Transverse colon (tissue), 4 donors: ENCODE measurements at regions of chr7 and their contacts with region 1.

Region 1: DNA sequence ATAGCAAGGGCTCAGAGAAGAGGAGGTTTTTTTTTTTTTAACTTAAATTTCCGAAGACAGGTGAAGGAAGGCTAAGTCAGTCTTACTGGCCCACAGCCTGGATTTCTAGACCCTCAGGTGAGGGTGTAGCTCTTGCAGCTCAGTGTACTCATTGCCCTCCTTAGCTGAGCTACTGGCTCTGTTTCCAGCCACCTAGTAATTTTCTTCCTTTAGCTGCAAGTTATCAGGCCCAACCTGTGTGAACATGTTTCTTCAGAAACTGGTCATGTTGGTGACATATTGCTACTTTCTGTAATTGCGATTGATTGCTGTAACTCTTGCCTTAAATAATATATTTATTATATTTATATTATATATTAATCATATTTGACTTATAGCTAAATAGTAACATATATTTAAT is 9.9 kb upstream of the TMEM229A start:
- DNase-seq: no peak
- H3K4me3 ChIP-seq: no peak overlapping the region
- H3K27ac ChIP-seq: no peak overlapping the region
- H3K4me1 ChIP-seq: peaks cover 0 to 28% (median 7%) of the 10 kb centered on the region in 4 donors
- H3K27me3 ChIP-seq: no peaks in the 10 kb centered on the region
- CTCF ChIP-seq: no peak
- EP300 ChIP-seq: no peak
- POLR2A ChIP-seq: no peak

Region 2: GRCh38 chr7:124022551-124022950 is 20.3 kb before region 1 on chr7:
- in situ Hi-C with region 1: no loop called
- intact Hi-C with region 1: loop called (anchors 1 kb)
- DNase-seq: no peak
- H3K4me3 ChIP-seq: no peak overlapping the region
- H3K27ac ChIP-seq: no peak overlapping the region
- H3K4me1 ChIP-seq: no peaks in the 10 kb centered on the region
- H3K27me3 ChIP-seq: peaks cover 11% of the 10 kb centered on the region
- CTCF ChIP-seq: no peak
- EP300 ChIP-seq: no peak
- POLR2A ChIP-seq: no peak

Region 3: GRCh38 chr7:124101173-124101768 is 58.5 kb after region 1 on chr7:
- in situ Hi-C with region 1: no loop called
- intact Hi-C with region 1: no loop called
- DNase-seq: no peak
- H3K4me3 ChIP-seq: no peak overlapping the region
- H3K27ac ChIP-seq: no peak overlapping the region
- H3K4me1 ChIP-seq: no peaks in the 10 kb centered on the region
- H3K27me3 ChIP-seq: no peaks in the 10 kb centered on the region
- CTCF ChIP-seq: peak in 4 of 5 experiments; percentile 33 to 47 (median 38)
- EP300 ChIP-seq: no peak
- POLR2A ChIP-seq: no peak

Region 4: DNA sequence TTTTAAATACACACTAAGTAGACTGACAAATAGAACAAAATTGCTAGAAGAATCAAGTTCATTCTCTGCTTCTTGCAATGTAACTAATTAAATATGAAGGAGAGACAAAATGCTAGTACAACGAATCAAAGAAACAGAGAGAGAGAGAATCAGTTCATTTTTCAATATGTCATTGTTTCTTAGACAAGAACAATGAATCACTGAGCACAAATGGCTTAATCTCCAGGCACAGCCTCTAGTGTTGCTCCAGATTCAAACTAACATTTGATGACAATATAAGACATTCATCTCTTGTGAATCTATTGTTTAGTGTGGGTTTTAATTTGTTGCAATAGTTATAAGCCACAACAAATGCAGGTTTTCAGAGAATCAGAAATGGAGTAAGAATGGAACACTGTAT is 347.5 kb after region 1 on chr7:
- in situ Hi-C with region 1: no loop called
- intact Hi-C with region 1: no loop called
- DNase-seq: no peak
- H3K4me3 ChIP-seq: no peak overlapping the region
- H3K27ac ChIP-seq: no peak overlapping the region
- H3K4me1 ChIP-seq: no peaks in the 10 kb centered on the region
- H3K27me3 ChIP-seq: no peaks in the 10 kb centered on the region
- CTCF ChIP-seq: no peak
- EP300 ChIP-seq: no peak
- POLR2A ChIP-seq: no peak

Region 5: GRCh38 chr7:124440081-124440480 is 397.3 kb after region 1 on chr7:
- in situ Hi-C with region 1: no loop called
- intact Hi-C with region 1: no loop called
- DNase-seq: no peak
- H3K4me3 ChIP-seq: no peak overlapping the region
- H3K27ac ChIP-seq: no peak overlapping the region
- H3K4me1 ChIP-seq: no peaks in the 10 kb centered on the region
- H3K27me3 ChIP-seq: no peaks in the 10 kb centered on the region
- CTCF ChIP-seq: no peak
- EP300 ChIP-seq: no peak
- POLR2A ChIP-seq: no peak

Region 6: DNA sequence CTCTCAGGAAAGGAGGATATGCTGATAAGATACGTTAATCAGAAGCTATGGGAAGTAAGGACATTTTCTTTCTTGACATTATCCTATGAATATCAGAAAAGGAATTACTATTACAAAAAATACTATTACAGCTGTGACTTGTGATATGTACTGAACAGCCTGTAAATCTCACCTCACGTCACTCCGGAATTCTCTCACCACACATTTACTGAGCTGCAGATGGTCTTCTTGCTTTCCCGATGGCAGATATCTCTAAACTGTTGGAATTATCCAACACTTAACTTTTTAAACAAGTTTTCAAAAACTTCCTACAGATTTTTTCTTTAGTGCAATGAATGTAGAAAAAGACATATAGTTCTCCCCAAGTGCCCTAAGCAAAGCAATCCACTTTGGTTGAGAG is 409.4 kb after region 1 on chr7:
- in situ Hi-C with region 1: no loop called
- intact Hi-C with region 1: loop called (anchors 5 kb)
- DNase-seq: no peak
- H3K4me3 ChIP-seq: no peak overlapping the region
- H3K27ac ChIP-seq: no peak overlapping the region
- H3K4me1 ChIP-seq: no peaks in the 10 kb centered on the region
- H3K27me3 ChIP-seq: no peaks in the 10 kb centered on the region
- CTCF ChIP-seq: no peak
- EP300 ChIP-seq: no peak
- POLR2A ChIP-seq: no peak

Region 7: DNA sequence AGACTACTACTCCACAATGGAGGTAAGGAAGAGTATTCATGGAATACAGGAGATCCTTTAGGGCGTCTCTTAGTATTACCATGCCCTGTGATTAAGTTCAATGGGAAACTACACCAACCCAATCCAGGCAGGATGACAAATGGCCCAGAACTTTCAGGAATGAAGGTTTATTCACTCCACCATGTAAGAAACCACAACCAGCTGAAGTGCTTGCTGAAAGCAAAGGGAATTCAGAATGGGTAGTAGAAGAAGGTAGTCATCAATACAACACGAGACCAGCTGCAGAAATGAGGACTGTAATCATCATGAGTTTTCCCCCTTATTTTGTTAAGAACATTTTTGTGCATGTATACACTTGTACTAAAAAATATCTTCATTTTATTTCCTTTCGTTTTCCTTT is 646.2 kb after region 1 on chr7:
- in situ Hi-C with region 1: no loop called
- intact Hi-C with region 1: no loop called
- DNase-seq: no peak
- H3K4me3 ChIP-seq: no peak overlapping the region
- H3K27ac ChIP-seq: no peak overlapping the region
- H3K4me1 ChIP-seq: no peaks in the 10 kb centered on the region
- H3K27me3 ChIP-seq: no peaks in the 10 kb centered on the region
- CTCF ChIP-seq: no peak
- EP300 ChIP-seq: no peak
- POLR2A ChIP-seq: no peak